AG04450 (cell line): ENCODE measurements at regions of chr22 and their contacts with region 1.

Region 1: GRCh38 chr22:26461188-26461810 is 22.3 kb downstream of the HPS4 start:
- DNase-seq: no peak
- H3K4me3 ChIP-seq: no peak overlapping the region
- H3K27ac ChIP-seq: no peak overlapping the region
- H3K27me3 ChIP-seq: no peaks in the 10 kb centered on the region
- CTCF ChIP-seq: peak; percentile 90

Region 2: GRCh38 chr22:26259519-26259918 is 201.8 kb before region 1 on chr22:
- CTCF ChIA-PET with region 1: no interaction called
- POLR2A ChIA-PET with region 1: no interaction called
- DNase-seq: no peak
- H3K4me3 ChIP-seq: no peak overlapping the region
- H3K27ac ChIP-seq: no peak overlapping the region
- H3K27me3 ChIP-seq: no peaks in the 10 kb centered on the region
- CTCF ChIP-seq: no peak

Region 3: GRCh38 chr22:26389125-26389524 is 72.2 kb before region 1 on chr22:
- CTCF ChIA-PET with region 1: interaction called, 85 read pairs
- POLR2A ChIA-PET with region 1: no interaction called
- DNase-seq: no peak
- H3K4me3 ChIP-seq: no peak overlapping the region
- H3K27ac ChIP-seq: no peak overlapping the region
- H3K27me3 ChIP-seq: peaks cover 1% of the 10 kb centered on the region
- CTCF ChIP-seq: no peak

Region 4: GRCh38 chr22:26404851-26405421 is 56.4 kb before region 1 on chr22:
- CTCF ChIA-PET with region 1: interaction called, 85 read pairs
- POLR2A ChIA-PET with region 1: no interaction called
- DNase-seq: no peak
- H3K4me3 ChIP-seq: no peak overlapping the region
- H3K27ac ChIP-seq: no peak overlapping the region
- H3K27me3 ChIP-seq: peaks cover 4% of the 10 kb centered on the region
- CTCF ChIP-seq: no peak

Region 5: DNA sequence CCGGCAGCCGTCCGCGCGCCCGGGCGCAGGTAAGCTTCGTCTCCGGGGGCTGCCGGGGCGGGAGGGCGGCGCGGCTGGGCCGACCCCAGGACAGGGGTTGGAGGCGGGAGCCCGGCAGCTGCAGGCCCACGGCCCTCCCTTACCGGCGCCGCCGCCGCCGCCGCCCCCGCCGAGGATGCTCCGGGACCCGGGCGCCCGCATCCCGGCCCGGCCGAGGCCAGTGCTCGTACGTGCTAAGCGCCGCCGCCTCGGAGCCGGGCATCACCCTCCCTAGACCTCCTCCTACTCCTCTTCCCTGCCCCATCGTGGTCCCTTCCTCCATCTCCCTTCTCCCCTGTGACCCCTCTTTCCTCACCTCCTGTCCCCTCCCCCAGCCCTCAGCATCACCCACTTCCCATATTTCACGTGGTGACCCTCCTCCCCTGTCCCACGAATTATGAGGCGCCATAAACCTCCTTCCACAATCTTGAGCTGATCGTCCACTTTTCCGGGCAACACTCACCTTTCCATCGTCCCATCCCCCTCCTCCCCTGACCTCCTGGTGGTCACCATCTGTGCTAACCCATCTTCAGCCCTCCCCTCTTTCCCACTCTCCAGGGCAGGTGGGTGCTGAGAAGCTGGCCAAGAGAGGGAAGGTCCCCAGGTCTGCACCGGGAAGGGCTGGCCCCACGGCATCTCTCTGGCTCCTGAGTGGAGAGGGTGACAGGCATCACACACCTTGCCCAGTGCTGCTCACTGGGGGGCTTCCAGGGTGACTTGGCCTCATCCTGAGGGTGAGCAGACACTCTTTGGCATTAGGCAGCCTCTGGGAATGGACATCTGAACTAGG is 31.6 kb before region 1 on chr22:
- CTCF ChIA-PET with region 1: interaction called, 17 read pairs
- POLR2A ChIA-PET with region 1: no interaction called
- DNase-seq: no peak
- H3K4me3 ChIP-seq: peak overlapping the region; percentile 68
- H3K27ac ChIP-seq: no peak overlapping the region
- H3K27me3 ChIP-seq: peaks cover 11% of the 10 kb centered on the region
- CTCF ChIP-seq: no peak

Region 6: DNA sequence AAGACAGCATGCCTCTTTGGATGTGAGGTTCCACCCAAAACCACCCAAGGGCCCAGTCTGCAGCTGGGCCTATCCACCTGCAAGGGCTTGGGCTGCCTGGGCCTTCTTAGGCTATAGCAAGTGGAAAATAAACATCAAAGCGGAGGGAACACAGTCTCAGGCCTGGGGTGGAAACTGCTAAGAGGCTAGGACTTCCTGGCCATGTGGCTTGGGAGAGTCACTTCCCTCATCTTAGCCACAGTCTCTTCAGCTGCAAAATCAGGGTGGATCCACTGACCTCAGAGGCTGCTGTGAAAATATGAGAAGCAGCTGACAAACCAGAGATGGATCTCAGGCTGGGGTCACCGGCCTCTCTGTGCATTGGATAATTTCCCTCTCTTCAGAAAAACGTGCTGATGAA is 81.5 kb after region 1 on chr22:
- CTCF ChIA-PET with region 1: no interaction called
- POLR2A ChIA-PET with region 1: no interaction called
- DNase-seq: no peak
- H3K4me3 ChIP-seq: no peak overlapping the region
- H3K27ac ChIP-seq: no peak overlapping the region
- H3K27me3 ChIP-seq: no peaks in the 10 kb centered on the region
- CTCF ChIP-seq: no peak